ENCODE measurements at regions of chr6 and their contacts with region 1.

Region 1: GRCh38 chr6:148451690-148452089 is 109.1 kb downstream of the SASH1 start:
- DNase-seq: no peak
- H3K4me3 ChIP-seq: no peak overlapping the region
- H3K27ac ChIP-seq: no peak overlapping the region
- H3K4me1 ChIP-seq: peaks cover 0 to 2% (median under 1%) of the 10 kb centered on the region in 4 experiments; a peak in 6 of 7 replicates
- H3K27me3 ChIP-seq: no peaks in the 10 kb centered on the region
- CTCF ChIP-seq: no peak
- EP300 ChIP-seq: no peak
- POLR2A ChIP-seq: no peak
- RAD21 ChIP-seq: no peak

Region 2: GRCh38 chr6:148422085-148422484 is 29.6 kb before region 1 on chr6:
- CTCF ChIA-PET with region 1: no interaction called
- POLR2A ChIA-PET with region 1: no interaction called
- DNase-seq: no peak
- H3K4me3 ChIP-seq: no peak overlapping the region
- H3K27ac ChIP-seq: no peak overlapping the region
- H3K4me1 ChIP-seq: 0 out of 7 replicates have a peak, but pooled peaks cover 0 to 3% (median 0%) of the 10 kb centered on the region in 4 experiments
- H3K27me3 ChIP-seq: no peaks in the 10 kb centered on the region
- CTCF ChIP-seq: no peak
- EP300 ChIP-seq: no peak
- POLR2A ChIP-seq: no peak
- RAD21 ChIP-seq: no peak

Region 3: GRCh38 chr6:148464319-148465010 is 12.8 kb after region 1 on chr6:
- CTCF ChIA-PET with region 1: interaction called, 24 read pairs
- POLR2A ChIA-PET with region 1: no interaction called
- DNase-seq: peak; percentile 46 to 85
- H3K4me3 ChIP-seq: no peak overlapping the region
- H3K27ac ChIP-seq: no peak overlapping the region
- H3K4me1 ChIP-seq: peaks cover 0 to 4% (median 0%) of the 10 kb centered on the region in 4 experiments; a peak in 3 of 7 replicates
- H3K27me3 ChIP-seq: peaks cover 0 to 1% (median 0%) of the 10 kb centered on the region in 4 experiments; a peak in 1 of 7 replicates
- CTCF ChIP-seq: peak; percentile 52 to 94 (median 86)
- EP300 ChIP-seq: no peak
- POLR2A ChIP-seq: no peak
- RAD21 ChIP-seq: peak; percentile 91 to 93